Esophagus muscularis mucosa (tissue), 4 donors: ENCODE measurements at regions of chr13 and their contacts with region 1.

Region 1: DNA sequence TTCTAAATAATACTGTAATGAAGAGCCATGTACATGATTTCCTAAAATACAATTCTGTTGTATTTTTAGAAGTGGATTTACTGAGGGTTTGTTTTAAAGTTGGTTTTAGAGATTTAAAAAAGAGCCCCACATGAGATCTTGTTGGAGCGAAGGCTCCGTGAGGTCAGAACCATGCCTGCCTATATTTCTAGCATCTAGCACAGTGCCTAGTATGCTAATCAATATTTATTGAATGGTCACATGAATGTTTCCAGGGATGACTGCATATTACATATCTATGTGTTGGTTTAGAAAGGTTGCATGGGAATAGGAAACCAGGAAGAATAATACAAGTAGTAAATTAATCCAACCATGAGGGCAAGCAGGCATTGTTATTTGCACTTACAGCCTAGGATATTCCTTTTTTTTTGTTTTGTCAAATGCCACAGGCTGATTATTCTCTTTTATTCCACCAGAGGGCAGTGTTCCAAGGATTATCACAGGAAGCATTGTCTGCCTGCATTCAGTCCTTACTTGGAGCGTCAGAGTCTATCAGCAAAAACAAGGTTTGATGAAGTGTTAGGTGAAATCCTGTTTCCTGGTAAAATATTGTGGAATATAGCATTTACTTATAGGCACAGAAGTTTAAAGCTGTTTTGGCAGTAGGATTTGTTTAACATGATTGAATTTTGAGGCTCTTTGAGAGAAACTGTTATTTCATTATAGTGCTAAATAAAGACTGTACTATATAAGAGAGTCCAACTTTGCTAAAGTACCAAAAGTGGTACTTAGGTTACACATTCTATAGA is 46.8 kb downstream of the COG3 start:
- DNase-seq: no peak
- H3K4me3 ChIP-seq: no peak overlapping the region
- H3K27ac ChIP-seq: peak overlapping the region in 2 of 4 donors; percentile 8 to 17
- H3K4me1 ChIP-seq: peaks cover 0 to 10% (median 2%) of the 10 kb centered on the region in 4 donors
- H3K27me3 ChIP-seq: no peaks in the 10 kb centered on the region
- CTCF ChIP-seq: peak; percentile 81 to 96 (median 86)
- EP300 ChIP-seq: no peak
- POLR2A ChIP-seq: no peak

Region 2: GRCh38 chr13:46160471-46161066 is 649.1 kb after region 1 on chr13:
- intact Hi-C with region 1: loop called (anchors 10 kb)
- DNase-seq: no peak
- H3K4me3 ChIP-seq: no peak overlapping the region
- H3K27ac ChIP-seq: no peak overlapping the region
- H3K4me1 ChIP-seq: peaks cover 0 to 6% (median 0%) of the 10 kb centered on the region in 4 donors
- H3K27me3 ChIP-seq: peaks cover 0 to 5% (median 0%) of the 10 kb centered on the region in 4 donors
- CTCF ChIP-seq: peak; percentile 60 to 78 (median 67)
- EP300 ChIP-seq: no peak
- POLR2A ChIP-seq: no peak